ENCODE measurements at regions of chr18 and their contacts with region 1.

Region 1: DNA sequence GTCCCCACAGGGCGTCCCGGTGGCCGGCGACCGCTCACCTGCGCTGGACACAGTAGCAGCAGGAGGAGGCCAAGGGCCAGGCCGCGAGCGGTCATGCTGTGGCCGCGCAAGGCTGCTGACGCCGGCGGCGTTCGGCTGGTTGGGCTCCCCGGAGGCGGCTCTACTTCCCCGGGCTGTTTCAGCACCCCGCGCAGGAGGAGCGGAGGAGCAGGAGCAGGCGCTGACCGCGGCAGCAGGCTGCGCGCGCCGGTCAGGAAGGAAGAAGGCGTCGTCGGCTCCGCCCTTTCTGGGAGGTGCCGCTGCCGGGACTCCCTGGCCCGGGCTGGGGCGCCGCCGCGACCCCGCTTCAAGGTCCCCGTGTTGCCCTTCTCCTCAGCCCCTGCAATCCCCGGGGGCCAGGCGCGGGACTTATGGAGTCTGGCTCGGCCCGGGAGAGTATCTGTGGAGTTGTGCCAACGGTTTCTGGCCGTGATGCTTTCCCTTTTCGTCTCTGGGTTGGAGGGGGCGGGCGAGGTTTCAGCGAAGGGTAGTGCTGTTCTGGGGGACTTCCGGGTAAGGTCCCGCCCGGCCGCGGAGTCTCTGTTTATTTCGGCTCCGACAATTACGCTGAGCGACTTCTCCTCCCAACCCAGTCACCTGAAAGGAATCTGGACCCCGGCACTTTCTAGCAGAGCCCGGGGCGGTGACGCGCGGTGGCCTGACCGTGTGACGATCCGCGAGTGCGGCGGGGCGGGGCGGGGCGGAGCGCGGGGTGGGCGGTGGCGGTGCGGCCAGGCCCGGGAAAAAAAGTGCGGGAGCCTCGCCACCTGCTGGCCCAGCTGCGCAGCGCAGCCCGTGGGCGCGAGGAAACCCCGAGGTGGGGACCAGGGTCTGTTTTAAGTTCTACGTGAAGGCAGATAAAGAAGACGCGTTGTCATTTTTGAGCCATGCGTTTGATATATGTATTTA is at the start of gene NPC1:
- DNase-seq: peak; percentile 93
- H3K4me3 Mint-ChIP-seq: peak within 1 kb of the TSS; percentile 84
- H3K27ac Mint-ChIP-seq: peak within 1 kb of the TSS; percentile 98
- H3K4me1 Mint-ChIP-seq: peaks cover 13% of the 10 kb centered on the region
- H3K27me3 Mint-ChIP-seq: no peaks in the 10 kb centered on the region
- CTCF ChIP-seq: peak; percentile 90
- total RNA-seq, gene NPC1: 60.4 and 78.8 TPM in 2 replicates

Region 2: DNA sequence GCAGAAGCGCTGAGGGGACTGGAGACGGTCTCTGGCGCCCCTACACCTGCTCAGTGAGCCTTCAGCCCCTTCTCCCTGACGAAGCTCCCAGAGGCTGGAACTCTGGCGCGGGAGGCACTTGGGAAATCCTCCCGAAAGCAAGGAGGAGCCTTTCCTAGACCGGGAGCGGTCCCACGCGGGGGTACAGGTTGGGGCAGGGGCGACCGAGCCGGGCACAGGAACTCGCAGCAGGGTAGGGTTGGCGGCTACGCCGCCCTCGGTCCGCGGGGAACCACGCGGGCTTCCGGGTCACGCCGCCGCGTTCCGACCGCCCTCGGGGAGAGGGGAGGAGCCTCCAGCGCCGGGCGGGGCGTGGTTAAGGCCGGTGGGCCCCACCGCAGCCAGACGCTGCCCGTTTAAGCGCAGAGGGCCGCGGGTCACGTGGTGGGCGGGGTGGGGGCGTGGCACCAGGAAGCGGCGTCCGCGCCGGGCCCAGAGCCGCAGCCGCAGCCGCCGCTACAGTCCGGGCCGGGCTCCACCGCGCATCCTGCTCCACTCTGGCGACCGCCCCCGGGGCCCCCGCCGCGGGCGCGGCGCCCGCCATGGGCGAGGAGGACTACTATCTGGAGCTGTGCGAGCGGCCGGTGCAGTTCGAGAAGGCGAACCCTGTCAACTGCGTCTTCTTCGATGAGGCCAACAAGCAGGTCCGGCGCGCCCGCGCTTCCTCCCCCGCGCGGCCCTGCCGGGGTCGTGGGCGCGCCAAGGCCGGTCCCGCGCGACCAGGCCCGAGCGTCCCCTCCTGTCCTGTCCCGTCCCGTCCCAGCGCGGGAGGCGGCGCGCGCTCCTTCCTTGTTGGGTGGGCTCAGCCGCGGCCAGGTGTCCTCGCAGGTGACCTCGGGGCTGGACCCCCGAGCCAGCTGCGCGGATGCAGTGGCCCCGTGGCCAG is 83.2 kb before region 1 on chr18 and contains the start of gene RMC1:
- CTCF ChIA-PET with region 1: interaction called, 4 read pairs
- POLR2A ChIA-PET with region 1: interaction called, 12 read pairs
- intact Hi-C with region 1: loop called (anchors 1 kb)
- DNase-seq: peak; percentile 91
- H3K4me3 Mint-ChIP-seq: peak within 1 kb of the TSS; percentile 81
- H3K27ac Mint-ChIP-seq: peak within 1 kb of the TSS; percentile 92
- H3K4me1 Mint-ChIP-seq: peaks cover 12% of the 10 kb centered on the region
- H3K27me3 Mint-ChIP-seq: no peaks in the 10 kb centered on the region
- CTCF ChIP-seq: no peak
- total RNA-seq, gene RMC1: 24.7 and 28.0 TPM in 2 replicates

Region 3: DNA sequence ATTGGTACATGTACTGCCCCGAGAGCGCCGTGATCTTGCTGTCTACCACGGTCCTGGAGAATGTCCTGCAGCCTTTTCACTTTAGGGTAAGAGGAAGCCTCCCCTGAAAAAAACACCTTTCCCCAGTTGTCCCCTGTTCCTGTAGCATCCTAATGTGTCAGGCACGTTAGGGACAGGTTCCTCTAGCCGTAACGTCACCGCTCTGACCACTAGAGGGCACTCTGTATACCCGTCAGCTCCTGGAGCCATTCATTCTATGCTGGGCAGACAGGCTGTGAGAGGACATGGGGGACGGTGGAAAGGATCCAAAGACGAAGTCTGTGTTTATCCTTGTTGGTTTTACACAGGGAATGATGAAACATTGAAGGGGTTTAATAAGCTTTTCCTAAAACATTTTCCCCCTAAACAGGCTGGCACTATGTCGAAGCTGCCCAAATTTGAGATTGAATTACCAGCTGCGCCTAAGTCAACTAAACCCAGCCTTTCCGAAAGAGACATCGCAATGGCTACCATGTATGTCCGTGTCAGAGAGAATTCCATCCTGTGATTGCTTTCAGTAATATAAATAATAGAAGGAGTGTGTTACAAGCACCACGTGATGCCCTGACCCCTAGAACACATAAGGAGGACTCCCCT is 70.5 kb before region 1 on chr18:
- CTCF ChIA-PET with region 1: interaction called, 26 read pairs
- POLR2A ChIA-PET with region 1: interaction called, 15 read pairs
- intact Hi-C with region 1: loop called (anchors 1 kb)
- DNase-seq: peak; percentile 79
- H3K4me3 Mint-ChIP-seq: no peak overlapping the region
- H3K27ac Mint-ChIP-seq: peak overlapping the region; percentile 10
- H3K4me1 Mint-ChIP-seq: peaks cover 17% of the 10 kb centered on the region
- H3K27me3 Mint-ChIP-seq: no peaks in the 10 kb centered on the region
- CTCF ChIP-seq: peak; percentile 70

Region 4: DNA sequence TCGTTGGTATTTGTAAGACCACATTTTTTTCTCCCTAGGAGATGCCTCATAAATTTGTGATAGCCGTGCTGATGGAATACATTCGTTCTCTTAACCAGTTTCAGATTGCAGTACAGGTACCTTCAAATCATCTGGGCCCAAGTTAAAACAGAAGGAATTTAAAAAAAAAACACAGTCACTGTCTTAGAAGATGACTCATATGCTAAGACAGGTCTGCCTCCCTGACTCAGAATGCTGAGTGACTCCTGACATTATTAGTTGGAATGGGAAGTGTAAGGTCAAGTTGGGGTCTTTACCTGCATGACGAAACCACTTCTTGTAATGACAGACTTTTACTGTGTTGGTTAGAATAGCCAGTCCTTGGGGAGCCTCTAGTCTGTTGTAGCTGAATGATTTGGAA is 56.9 kb before region 1 on chr18:
- CTCF ChIA-PET with region 1: interaction called, 7 read pairs
- POLR2A ChIA-PET with region 1: interaction called, 7 read pairs
- intact Hi-C with region 1: loop called (anchors 2 kb)
- DNase-seq: peak; percentile 88
- H3K4me3 Mint-ChIP-seq: no peak overlapping the region
- H3K27ac Mint-ChIP-seq: peak overlapping the region; percentile 37
- H3K4me1 Mint-ChIP-seq: peaks cover 14% of the 10 kb centered on the region
- H3K27me3 Mint-ChIP-seq: no peaks in the 10 kb centered on the region
- CTCF ChIP-seq: no peak

Region 5: GRCh38 chr18:23547846-23548245 is 38.7 kb before region 1 on chr18:
- CTCF ChIA-PET with region 1: interaction called, 4 read pairs
- POLR2A ChIA-PET with region 1: interaction called, 5 read pairs
- intact Hi-C with region 1: loop called (anchors 5 kb)
- DNase-seq: peak; percentile 70
- H3K4me3 Mint-ChIP-seq: no peak overlapping the region
- H3K27ac Mint-ChIP-seq: peak overlapping the region; percentile 74
- H3K4me1 Mint-ChIP-seq: peaks cover 12% of the 10 kb centered on the region
- H3K27me3 Mint-ChIP-seq: no peaks in the 10 kb centered on the region
- CTCF ChIP-seq: no peak

Region 6: GRCh38 chr18:23565916-23566547 is 20.5 kb before region 1 on chr18:
- CTCF ChIA-PET with region 1: interaction called, 5 read pairs
- POLR2A ChIA-PET with region 1: interaction called, 10 read pairs
- intact Hi-C with region 1: no loop called
- DNase-seq: peak; percentile 72
- H3K4me3 Mint-ChIP-seq: no peak overlapping the region
- H3K27ac Mint-ChIP-seq: peak overlapping the region; percentile 37
- H3K4me1 Mint-ChIP-seq: peaks cover 12% of the 10 kb centered on the region
- H3K27me3 Mint-ChIP-seq: no peaks in the 10 kb centered on the region
- CTCF ChIP-seq: no peak

Region 7: GRCh38 chr18:23573626-23574431 is 12.7 kb before region 1 on chr18:
- CTCF ChIA-PET with region 1: interaction called, 9 read pairs
- POLR2A ChIA-PET with region 1: interaction called, 35 read pairs
- intact Hi-C with region 1: no loop called
- DNase-seq: peak; percentile 80
- H3K4me3 Mint-ChIP-seq: peak overlapping the region; percentile 57
- H3K27ac Mint-ChIP-seq: peak overlapping the region; percentile 88
- H3K4me1 Mint-ChIP-seq: peaks cover 23% of the 10 kb centered on the region
- H3K27me3 Mint-ChIP-seq: no peaks in the 10 kb centered on the region
- CTCF ChIP-seq: no peak

Region 8: GRCh38 chr18:23662309-23663263 is 76.1 kb after region 1 on chr18 and contains the start of gene ANKRD29:
- CTCF ChIA-PET with region 1: no interaction called
- POLR2A ChIA-PET with region 1: no interaction called
- intact Hi-C with region 1: no loop called
- DNase-seq: peak; percentile 35
- H3K4me3 Mint-ChIP-seq: peak within 1 kb of the TSS; percentile 73
- H3K27ac Mint-ChIP-seq: peak within 1 kb of the TSS; percentile 7
- H3K4me1 Mint-ChIP-seq: peaks cover 12% of the 10 kb centered on the region
- H3K27me3 Mint-ChIP-seq: no peaks in the 10 kb centered on the region
- CTCF ChIP-seq: no peak
- total RNA-seq, gene ANKRD29: 2.4 and 3.8 TPM in 2 replicates

Region 9: GRCh38 chr18:23725832-23726661 is 139.5 kb after region 1 on chr18:
- CTCF ChIA-PET with region 1: no interaction called
- POLR2A ChIA-PET with region 1: no interaction called
- intact Hi-C with region 1: no loop called
- DNase-seq: no peak
- H3K4me3 Mint-ChIP-seq: no peak overlapping the region
- H3K27ac Mint-ChIP-seq: peak overlapping the region; percentile 94
- H3K4me1 Mint-ChIP-seq: peaks cover 27% of the 10 kb centered on the region
- H3K27me3 Mint-ChIP-seq: no peaks in the 10 kb centered on the region
- CTCF ChIP-seq: no peak

Measured in MCF 10A (cell line).